K562 (cell line): ENCODE measurements at regions of chr14 and their contacts with region 1.

Region 1: GRCh38 chr14:52780893-52781292 is 10.5 kb downstream of the GNPNAT1 start:
- DNase-seq: no peak
- ATAC-seq: no peak
- H3K4me3 ChIP-seq: no peak overlapping the region
- H3K27ac ChIP-seq: no peak overlapping the region
- H3K4me1 ChIP-seq: no peaks in the 10 kb centered on the region
- H3K27me3 ChIP-seq: no peaks in the 10 kb centered on the region
- CTCF ChIP-seq: no peak
- EP300 ChIP-seq: no peak
- POLR2A ChIP-seq: no peak
- RAD21 ChIP-seq: no peak

Region 2: DNA sequence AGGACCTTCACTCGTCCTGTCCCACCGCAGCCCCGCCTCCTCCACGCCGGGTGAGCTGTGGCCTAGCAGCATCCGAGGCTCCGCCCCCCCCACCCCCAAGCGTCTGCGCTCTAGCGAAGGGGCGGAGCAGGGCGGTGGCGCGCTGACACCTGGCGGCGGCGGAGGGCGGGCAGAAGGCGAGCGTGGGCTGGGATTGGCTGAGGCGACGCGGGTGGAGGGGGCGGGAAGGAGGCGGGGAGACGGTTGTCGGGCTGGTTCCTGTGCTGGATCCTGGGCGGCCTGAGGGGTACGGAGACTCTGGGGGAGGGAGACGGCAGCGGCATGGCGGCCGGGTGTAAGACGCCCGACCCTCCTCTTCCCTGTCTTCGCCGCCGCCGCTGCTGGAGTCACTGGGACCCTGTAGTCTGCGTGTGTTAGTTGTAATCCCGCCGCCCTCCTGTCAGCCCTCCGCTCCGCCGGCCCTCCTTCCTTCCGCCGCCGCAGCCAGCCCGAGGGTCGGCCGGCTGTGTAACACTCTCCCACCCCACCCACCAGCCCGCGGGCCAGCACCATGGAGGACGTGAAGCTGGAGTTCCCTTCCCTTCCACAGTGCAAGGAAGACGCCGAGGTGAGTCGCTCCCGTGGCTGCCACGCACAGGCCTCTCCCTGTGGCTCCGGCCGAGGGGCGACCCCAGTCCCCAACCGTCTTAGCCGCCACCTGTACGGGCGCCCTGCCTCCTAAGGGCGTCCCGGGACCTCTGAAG is 50.8 kb before region 1 on chr14 and contains the start of gene STYX:
- CTCF ChIA-PET with region 1: no interaction called
- POLR2A ChIA-PET with region 1: no interaction called
- in situ Hi-C with region 1: no loop called
- intact Hi-C with region 1: loop called (anchors 5 kb)
- DNase-seq: peak; percentile 84 to 97 (median 88)
- ATAC-seq: peak; percentile 97
- H3K4me3 ChIP-seq: peak within 1 kb of the TSS; percentile 99
- H3K27ac ChIP-seq: peak within 1 kb of the TSS; percentile 89
- H3K4me1 ChIP-seq: peaks cover 0 to 14% of the 10 kb centered on the region in 2 experiments; a peak in 4 of 5 replicates
- H3K27me3 ChIP-seq: no peaks in the 10 kb centered on the region
- CTCF ChIP-seq: no peak
- EP300 ChIP-seq: no peak
- POLR2A ChIP-seq: peak; percentile 86
- RAD21 ChIP-seq: no peak
- polyA plus RNA-seq, gene STYX: 5.0 to 11.8 TPM